ENCODE measurements at regions of chr5 and their contacts with region 1.

Region 1: DNA sequence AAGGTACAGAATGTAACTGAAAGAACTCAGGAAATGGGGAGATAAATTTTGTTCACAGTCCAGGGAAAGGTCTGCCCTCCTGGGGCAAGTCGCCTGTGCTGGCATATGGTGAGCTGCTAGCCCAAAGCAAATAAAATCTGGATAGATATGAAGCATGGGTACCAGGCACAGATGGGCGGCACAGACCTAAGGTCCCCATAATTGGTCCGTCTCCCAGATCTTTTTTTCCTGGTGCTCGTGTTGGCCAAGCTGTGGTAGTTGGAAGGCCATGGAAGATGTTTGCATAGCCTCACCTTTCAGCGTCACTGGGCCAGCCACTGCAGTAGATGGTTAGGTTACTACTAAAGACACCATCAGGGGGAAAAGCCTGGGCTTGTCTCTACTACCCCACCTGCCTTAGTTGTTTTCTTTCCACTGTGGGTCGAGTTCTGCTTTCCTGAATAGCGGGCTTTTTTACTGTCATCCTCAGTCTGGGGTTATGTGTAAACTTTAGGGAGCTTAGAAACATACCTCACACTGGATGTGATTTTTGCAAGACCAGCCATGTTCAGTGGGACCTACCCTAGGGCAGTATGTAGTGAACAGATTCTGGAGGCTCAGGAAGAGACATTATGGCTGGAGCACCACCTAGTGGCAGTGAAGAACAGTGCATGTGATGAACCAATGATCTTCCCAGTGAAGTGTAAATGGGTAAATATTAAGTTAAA is 24.2 kb upstream of the GLRX start:
- DNase-seq: peak; percentile 38 to 73 (median 68)
- ATAC-seq: peak; percentile 88
- H3K4me3 ChIP-seq: no peak overlapping the region
- H3K4me3 Mint-ChIP-seq: no peak overlapping the region
- H3K27ac ChIP-seq: no peak overlapping the region
- H3K27ac Mint-ChIP-seq: peak overlapping the region in 2 of 9 donors; percentile 3 to 18
- H3K4me1 ChIP-seq: peaks cover 10 to 13% of the 10 kb centered on the region in 2 donors
- H3K4me1 Mint-ChIP-seq: peaks cover 10 to 33% (median 16%) of the 10 kb centered on the region in 7 donors
- H3K27me3 ChIP-seq: no peaks in the 10 kb centered on the region
- H3K27me3 Mint-ChIP-seq: peaks cover 0 to 15% (median 0%) of the 10 kb centered on the region in 5 donors

Region 2: DNA sequence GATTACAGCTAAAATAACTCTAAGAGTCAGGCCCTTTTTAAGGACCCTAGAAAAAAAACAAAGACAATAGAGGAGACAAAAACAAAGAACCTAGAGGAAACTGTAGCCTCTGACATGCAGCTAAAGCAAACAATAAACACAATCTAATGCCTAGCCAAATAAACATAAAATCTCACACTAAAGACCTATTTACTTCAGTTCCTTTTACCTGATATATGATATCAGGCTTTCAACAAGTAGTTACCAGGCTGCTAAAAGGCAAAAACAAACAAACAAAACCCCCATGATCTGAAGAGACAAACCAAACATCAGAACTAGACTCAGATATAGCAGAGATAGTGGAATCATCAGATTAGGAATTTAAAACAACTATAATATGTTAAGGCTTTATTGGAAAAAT is 1878.8 kb before region 1 on chr5:
- CTCF ChIA-PET with region 1: no interaction called
- POLR2A ChIA-PET with region 1: no interaction called
- intact Hi-C with region 1: no loop called
- DNase-seq: no peak
- ATAC-seq: no peak
- H3K4me3 ChIP-seq: no peak overlapping the region
- H3K4me3 Mint-ChIP-seq: no peak overlapping the region
- H3K27ac ChIP-seq: no peak overlapping the region
- H3K27ac Mint-ChIP-seq: no peak overlapping the region
- H3K4me1 ChIP-seq: no peaks in the 10 kb centered on the region
- H3K4me1 Mint-ChIP-seq: peaks cover 0 to 23% (median 14%) of the 10 kb centered on the region in 7 donors
- H3K27me3 ChIP-seq: no peaks in the 10 kb centered on the region
- H3K27me3 Mint-ChIP-seq: no peaks in the 10 kb centered on the region

Region 3: GRCh38 chr5:95283761-95284415 is 562.8 kb before region 1 on chr5:
- CTCF ChIA-PET with region 1: no interaction called
- POLR2A ChIA-PET with region 1: no interaction called
- intact Hi-C with region 1: loop called in 1 of 2 experiments (anchors 5 kb)
- DNase-seq: peak in 7 of 9 donors; percentile 4 to 33 (median 15)
- ATAC-seq: peak; percentile 74
- H3K4me3 ChIP-seq: peak overlapping the region; percentile 40
- H3K4me3 Mint-ChIP-seq: peak overlapping the region in 7 of 10 donors; percentile 38 to 82 (median 72)
- H3K27ac ChIP-seq: no peak overlapping the region
- H3K27ac Mint-ChIP-seq: no peak overlapping the region
- H3K4me1 ChIP-seq: no peaks in the 10 kb centered on the region
- H3K4me1 Mint-ChIP-seq: peaks cover 0 to 17% (median 11%) of the 10 kb centered on the region in 7 donors
- H3K27me3 ChIP-seq: peaks cover 8 to 13% of the 10 kb centered on the region in 2 donors
- H3K27me3 Mint-ChIP-seq: peaks cover 56 to 74% (median 66%) of the 10 kb centered on the region in 5 donors

Region 4: GRCh38 chr5:95730730-95731570 is 115.8 kb before region 1 on chr5 and contains the start of gene RHOBTB3:
- CTCF ChIA-PET with region 1: interaction called, 3 read pairs
- POLR2A ChIA-PET with region 1: no interaction called
- intact Hi-C with region 1: loop called in 1 of 2 experiments (anchors 2 kb)
- DNase-seq: peak; percentile 20 to 58 (median 41)
- ATAC-seq: peak; percentile 77
- H3K4me3 ChIP-seq: peak within 1 kb of the TSS; percentile 64
- H3K4me3 Mint-ChIP-seq: peak within 1 kb of the TSS; percentile 83 to 94 (median 88)
- H3K27ac ChIP-seq: peak within 1 kb of the TSS; percentile 9
- H3K27ac Mint-ChIP-seq: peak within 1 kb of the TSS in 8 of 9 donors; percentile 30 to 88 (median 62)
- H3K4me1 ChIP-seq: peaks cover 0 to 20% of the 10 kb centered on the region in 2 donors
- H3K4me1 Mint-ChIP-seq: peaks cover 32 to 88% (median 63%) of the 10 kb centered on the region in 7 donors
- H3K27me3 ChIP-seq: peaks cover 4 to 6% of the 10 kb centered on the region in 2 donors
- H3K27me3 Mint-ChIP-seq: peaks cover 6 to 79% (median 13%) of the 10 kb centered on the region in 5 donors
- total RNA-seq, gene RHOBTB3: 0.24 to 9.6 (median 1.6) TPM

Region 5: GRCh38 chr5:95808686-95809413 is 37.9 kb before region 1 on chr5:
- CTCF ChIA-PET with region 1: interaction called, 23 read pairs
- POLR2A ChIA-PET with region 1: interaction called, 8 read pairs
- intact Hi-C with region 1: loop called (anchors 1 to 2 kb)
- DNase-seq: peak; percentile 54 to 92 (median 88)
- ATAC-seq: peak; percentile 100
- H3K4me3 ChIP-seq: peak overlapping the region; percentile 24
- H3K4me3 Mint-ChIP-seq: peak overlapping the region; percentile 21 to 84 (median 76)
- H3K27ac ChIP-seq: peak overlapping the region; percentile 75
- H3K27ac Mint-ChIP-seq: peak overlapping the region; percentile 76 to 98 (median 90)
- H3K4me1 ChIP-seq: peaks cover 31 to 49% of the 10 kb centered on the region in 2 donors
- H3K4me1 Mint-ChIP-seq: peaks cover 53 to 71% (median 64%) of the 10 kb centered on the region in 7 donors
- H3K27me3 ChIP-seq: no peaks in the 10 kb centered on the region
- H3K27me3 Mint-ChIP-seq: no peaks in the 10 kb centered on the region

Region 6: DNA sequence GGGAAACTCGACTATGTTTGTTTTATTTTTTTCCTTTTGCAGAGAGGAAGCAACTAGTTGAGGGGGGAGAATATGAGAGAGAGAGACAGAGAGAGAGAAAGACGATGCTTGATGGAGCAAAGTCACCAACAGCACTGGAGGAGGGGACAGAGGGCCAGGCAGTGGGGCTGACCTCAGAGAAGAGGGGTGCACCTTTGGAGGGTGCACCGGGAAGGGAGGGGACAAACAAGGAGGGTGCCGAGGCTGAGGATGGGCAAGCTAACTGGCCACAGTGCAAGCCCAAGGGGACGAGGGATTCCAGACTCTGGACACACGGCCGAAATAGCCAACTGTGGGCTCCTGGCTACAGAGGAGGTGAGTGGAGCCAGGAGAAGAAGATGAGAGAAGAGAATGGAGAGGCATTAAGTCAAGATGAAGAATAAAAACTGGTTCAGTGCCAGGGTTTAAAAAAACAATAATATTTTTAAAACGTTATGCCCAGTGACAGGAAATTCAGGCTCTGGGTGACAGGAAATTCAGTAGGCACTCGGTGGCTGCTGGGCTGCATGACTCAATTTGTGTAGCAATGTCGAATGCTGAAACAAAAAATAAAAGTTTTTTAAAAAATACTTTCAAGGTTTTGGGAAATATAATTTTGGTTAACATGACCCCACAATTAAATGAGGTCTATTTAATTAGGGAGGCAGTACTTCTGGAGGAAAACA is 10.9 kb before region 1 on chr5:
- CTCF ChIA-PET with region 1: interaction called, 16 read pairs
- POLR2A ChIA-PET with region 1: interaction called, 4 read pairs
- intact Hi-C with region 1: loop called (anchors 1 kb)
- DNase-seq: peak in 4 of 9 donors; percentile 27 to 38 (median 36)
- ATAC-seq: no peak
- H3K4me3 ChIP-seq: peak overlapping the region; percentile 60
- H3K4me3 Mint-ChIP-seq: peak overlapping the region; percentile 85 to 96 (median 92)
- H3K27ac ChIP-seq: peak overlapping the region; percentile 74
- H3K27ac Mint-ChIP-seq: peak overlapping the region; percentile 75 to 98 (median 92)
- H3K4me1 ChIP-seq: peaks cover 15 to 21% of the 10 kb centered on the region in 2 donors
- H3K4me1 Mint-ChIP-seq: peaks cover 36 to 63% (median 61%) of the 10 kb centered on the region in 7 donors
- H3K27me3 ChIP-seq: no peaks in the 10 kb centered on the region
- H3K27me3 Mint-ChIP-seq: no peaks in the 10 kb centered on the region